ENCODE measurements at regions of chr17 and their contacts with region 1.

Region 1: DNA sequence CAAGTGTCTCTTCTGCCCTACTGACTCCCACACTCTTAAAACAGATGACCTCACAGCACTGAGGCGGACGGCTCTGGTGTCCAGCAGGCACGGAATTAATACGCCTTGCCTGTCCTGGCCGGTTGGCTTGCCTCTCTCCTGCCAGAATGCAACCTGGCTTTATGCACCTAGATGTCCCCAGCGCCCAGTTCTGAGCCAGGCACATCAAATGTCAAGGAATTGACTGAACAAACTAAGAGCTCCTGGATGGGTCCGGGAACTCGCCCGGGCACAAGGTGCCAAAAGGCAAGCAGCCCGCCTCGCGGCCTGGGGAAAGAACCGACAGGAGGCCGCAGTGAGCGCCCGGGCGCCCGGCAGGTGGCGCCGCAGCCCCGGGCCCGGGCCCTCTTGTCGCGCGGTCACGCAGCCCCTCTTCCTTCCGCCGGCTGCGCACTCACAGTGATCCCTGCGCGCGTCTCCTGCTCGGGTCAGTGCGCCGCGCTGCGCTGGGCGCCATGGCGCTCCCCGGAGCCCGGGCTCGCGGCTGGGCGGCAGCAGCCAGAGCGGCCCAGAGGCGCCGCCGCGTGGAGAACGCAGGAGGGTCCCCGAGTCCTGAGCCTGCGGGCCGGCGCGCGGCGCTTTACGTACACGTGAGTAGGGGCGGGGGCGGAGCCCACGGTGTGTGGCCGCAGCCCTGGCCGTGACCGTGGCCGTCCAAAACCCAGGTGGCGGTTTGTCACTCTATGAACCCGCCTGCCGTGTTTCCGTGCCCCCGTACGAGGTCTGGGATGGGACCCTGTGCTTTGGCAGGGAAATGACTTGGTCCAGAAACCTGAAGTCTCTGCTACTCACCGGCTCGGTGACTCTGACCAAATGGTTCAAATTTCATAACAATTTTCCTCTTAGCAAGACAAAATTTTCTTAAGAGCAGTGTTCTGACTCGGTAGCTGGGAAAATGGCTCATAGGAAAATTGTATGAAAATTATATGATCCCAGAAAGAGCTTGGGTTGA is at the start of gene RSAD1:
- DNase-seq: peak; percentile 81 to 93
- H3K4me3 ChIP-seq: peak within 1 kb of the TSS; percentile 86
- H3K27ac ChIP-seq: peak within 1 kb of the TSS; percentile 54
- H3K4me1 ChIP-seq: peaks cover 32% of the 10 kb centered on the region
- H3K27me3 ChIP-seq: no peaks in the 10 kb centered on the region
- CTCF ChIP-seq: peak; percentile 83
- total RNA-seq, gene RSAD1: 14.8 and 15.1 TPM in 2 replicates

Region 2: GRCh38 chr17:49952209-49952911 is 526.3 kb before region 1 on chr17:
- CTCF ChIA-PET with region 1: no interaction called
- POLR2A ChIA-PET with region 1: no interaction called
- intact Hi-C with region 1: no loop called
- DNase-seq: peak; percentile 70 to 83
- H3K4me3 ChIP-seq: no peak overlapping the region
- H3K27ac ChIP-seq: no peak overlapping the region
- H3K4me1 ChIP-seq: no peaks in the 10 kb centered on the region
- H3K27me3 ChIP-seq: peaks cover 3% of the 10 kb centered on the region; the same call in 1 of the 2 replicates
- CTCF ChIP-seq: peak; percentile 97

Region 3: DNA sequence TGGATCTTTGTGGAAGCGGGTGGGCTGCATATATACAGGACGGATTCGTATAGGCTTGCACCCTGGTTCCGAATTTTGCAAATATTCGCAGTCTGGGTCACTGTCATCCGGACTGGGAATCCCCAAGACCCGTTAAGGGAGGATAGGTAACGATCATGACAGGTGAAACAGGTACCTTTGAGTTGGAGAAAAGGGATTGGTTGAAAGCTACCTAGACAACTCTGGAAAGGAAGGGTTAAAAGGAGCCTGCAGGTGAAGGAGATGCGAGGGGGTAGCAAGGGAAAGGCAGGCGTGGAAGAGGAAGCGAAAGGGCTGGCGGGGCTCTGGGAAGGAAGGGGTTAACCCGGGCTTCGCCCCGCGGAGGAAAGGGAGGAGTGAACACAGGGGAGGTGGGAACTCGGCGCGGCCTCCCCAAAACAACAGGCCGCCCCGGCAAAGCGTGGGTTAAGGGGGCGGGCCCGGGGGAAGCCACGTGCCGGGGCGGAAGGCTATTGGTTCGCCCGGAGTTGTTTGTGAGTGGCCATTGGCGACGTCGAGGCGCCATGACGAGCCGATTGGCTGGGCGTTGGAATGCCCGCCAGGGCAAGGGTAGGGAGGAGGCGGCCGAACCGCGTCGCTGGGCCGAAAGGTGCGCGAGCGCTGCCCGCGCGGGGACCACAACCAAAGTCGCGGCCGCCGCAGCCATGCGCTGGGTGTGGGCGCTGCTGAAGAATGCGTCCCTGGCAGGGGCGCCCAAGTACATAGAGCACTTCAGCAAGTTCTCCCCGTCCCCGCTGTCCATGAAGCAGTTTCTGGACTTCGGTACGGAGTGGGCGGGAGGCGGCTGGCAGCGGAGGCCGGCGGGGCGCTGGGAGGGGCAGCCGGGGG is 383.7 kb before region 1 on chr17 and contains the start of gene PDK2:
- CTCF ChIA-PET with region 1: no interaction called
- POLR2A ChIA-PET with region 1: no interaction called
- intact Hi-C with region 1: loop called (anchors 10 kb)
- DNase-seq: peak; percentile 92 to 97
- H3K4me3 ChIP-seq: peak within 1 kb of the TSS; percentile 88
- H3K27ac ChIP-seq: peak within 1 kb of the TSS; percentile 12; the same call in 1 of the 2 replicates
- H3K4me1 ChIP-seq: peaks cover 18% of the 10 kb centered on the region
- H3K27me3 ChIP-seq: no peaks in the 10 kb centered on the region
- CTCF ChIP-seq: no peak
- total RNA-seq, gene PDK2: 38.6 and 58.7 TPM in 2 replicates

Region 4: DNA sequence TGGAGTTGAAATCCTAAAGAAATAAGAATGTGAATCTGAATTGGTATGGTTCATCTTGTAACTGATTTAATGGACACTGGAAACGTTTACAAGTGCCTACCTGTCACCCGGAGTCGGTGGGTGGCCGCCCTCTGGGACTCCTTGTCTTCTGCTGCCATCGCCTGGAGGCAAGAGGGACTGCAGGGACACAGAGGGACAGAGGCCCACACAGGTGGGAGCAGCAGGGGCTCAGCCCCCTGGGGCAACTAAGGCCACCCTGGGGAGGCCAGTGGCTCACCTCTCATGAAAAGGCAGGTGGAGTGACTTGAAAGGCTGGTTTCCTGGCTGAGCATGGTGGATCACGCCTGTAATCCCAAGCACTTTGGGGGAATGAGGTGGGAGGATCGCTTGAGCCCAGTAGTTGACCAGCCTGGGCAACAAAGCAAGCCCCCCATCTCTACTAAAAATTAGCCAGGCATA is 181.2 kb before region 1 on chr17:
- CTCF ChIA-PET with region 1: interaction called, 3 read pairs
- POLR2A ChIA-PET with region 1: no interaction called
- intact Hi-C with region 1: loop called (anchors 2 kb)
- DNase-seq: peak; percentile 47 to 81
- H3K4me3 ChIP-seq: no peak overlapping the region
- H3K27ac ChIP-seq: no peak overlapping the region
- H3K4me1 ChIP-seq: no peaks in the 10 kb centered on the region
- H3K27me3 ChIP-seq: no peaks in the 10 kb centered on the region
- CTCF ChIP-seq: peak; percentile 94

Region 5: DNA sequence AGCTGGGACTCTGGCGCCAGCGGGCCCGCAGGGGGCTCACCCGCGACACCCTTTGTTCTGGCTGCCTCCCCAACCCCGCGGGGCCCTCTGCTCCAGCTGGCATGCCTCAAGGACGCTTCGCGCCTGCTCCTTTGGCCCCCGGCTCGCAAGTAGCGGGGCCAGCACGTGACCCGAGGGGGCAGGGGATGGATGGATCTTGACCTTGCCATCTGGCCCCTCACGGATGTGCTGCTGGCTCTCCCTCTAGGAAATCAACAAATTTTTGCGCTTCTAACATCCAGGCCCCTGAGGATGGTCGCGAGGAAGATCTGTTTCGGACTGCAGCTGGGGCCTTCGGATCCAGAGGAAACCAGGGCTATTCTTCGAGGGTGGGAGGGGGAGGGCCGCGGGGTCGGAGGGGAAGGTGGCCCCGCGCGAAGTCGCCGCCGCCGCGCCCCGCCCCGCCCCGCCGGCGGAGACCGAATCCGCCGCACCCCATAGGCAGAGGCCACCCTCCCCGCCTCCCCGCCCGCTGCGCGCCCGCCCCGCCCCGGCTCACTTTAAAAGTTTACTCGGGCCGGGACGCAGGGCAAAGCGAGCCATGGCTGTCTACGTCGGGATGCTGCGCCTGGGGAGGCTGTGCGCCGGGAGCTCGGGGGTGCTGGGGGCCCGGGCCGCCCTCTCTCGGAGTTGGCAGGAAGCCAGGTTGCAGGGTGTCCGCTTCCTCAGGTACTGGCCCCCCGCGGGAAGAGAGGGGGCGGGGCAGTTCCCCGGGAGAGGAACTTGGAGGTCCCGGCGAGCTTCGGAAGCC is 52.8 kb before region 1 on chr17 and contains the start of gene ACSF2:
- CTCF ChIA-PET with region 1: no interaction called
- POLR2A ChIA-PET with region 1: no interaction called
- intact Hi-C with region 1: loop called (anchors 1 kb)
- DNase-seq: peak; percentile 56 to 72
- H3K4me3 ChIP-seq: peak within 1 kb of the TSS; percentile 63
- H3K27ac ChIP-seq: peak within 1 kb of the TSS; percentile 92
- H3K4me1 ChIP-seq: peaks cover 84% of the 10 kb centered on the region
- H3K27me3 ChIP-seq: no peaks in the 10 kb centered on the region
- CTCF ChIP-seq: no peak
- total RNA-seq, gene ACSF2: 149 and 154 TPM in 2 replicates

Region 6: DNA sequence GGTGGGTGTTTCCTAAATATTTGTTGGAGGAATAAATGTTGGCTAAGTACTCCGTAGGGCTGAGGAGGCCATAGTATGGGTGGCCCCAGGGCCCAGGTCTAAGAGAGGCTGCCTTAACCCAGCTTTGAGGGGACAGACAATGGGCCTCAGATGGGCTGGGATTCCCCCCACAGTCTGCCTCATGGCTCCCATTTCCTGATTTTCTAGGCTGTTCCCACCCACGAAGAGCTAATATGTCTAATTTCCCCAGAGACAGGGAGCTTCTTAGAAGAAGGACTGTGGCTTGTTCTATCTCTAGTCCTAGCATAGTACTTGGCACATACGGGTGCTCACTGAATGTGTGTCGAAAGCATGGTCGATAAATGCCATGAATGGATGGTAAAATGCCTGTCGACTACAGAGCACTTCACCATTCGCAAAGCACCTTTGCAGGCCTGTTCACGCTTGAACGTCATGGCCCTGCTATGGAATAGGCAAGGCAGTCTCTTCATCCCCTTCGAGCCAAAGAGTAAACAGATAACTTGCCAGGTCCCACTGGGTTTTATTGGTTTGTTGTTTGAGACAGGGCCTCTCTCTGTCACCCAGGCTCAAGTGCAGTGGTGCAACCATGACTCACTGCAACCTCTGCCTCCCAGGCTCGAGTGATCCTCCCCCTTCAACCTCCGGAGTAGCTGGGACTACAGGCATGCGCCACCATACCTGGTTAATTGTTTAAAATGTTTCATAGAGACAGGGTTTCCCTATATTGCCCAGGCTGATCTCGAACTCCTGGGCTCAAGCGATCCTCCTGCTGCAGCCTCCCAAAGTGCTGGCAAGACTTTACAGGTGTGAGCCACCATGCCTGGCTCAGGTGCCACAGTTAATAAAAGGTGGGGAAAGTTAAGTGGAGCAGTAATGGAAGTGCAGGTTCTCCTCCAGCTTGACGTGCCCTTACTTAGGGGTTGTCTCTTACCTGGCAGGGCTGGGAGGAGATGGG is 19.7 kb before region 1 on chr17:
- CTCF ChIA-PET with region 1: no interaction called
- POLR2A ChIA-PET with region 1: no interaction called
- intact Hi-C with region 1: no loop called
- DNase-seq: peak in 1 of 2 experiments; percentile 62
- H3K4me3 ChIP-seq: no peak overlapping the region
- H3K27ac ChIP-seq: 0 out of 2 replicates have a peak overlapping the region, but pooled peaks have one; percentile 9
- H3K4me1 ChIP-seq: peaks cover 38% of the 10 kb centered on the region
- H3K27me3 ChIP-seq: no peaks in the 10 kb centered on the region
- CTCF ChIP-seq: no peak

Region 7: GRCh38 chr17:50514946-50515702 is 36.4 kb after region 1 on chr17:
- CTCF ChIA-PET with region 1: no interaction called
- POLR2A ChIA-PET with region 1: no interaction called
- intact Hi-C with region 1: no loop called
- DNase-seq: no peak
- H3K4me3 ChIP-seq: no peak overlapping the region
- H3K27ac ChIP-seq: no peak overlapping the region
- H3K4me1 ChIP-seq: peaks cover 31% of the 10 kb centered on the region
- H3K27me3 ChIP-seq: no peaks in the 10 kb centered on the region
- CTCF ChIP-seq: no peak

Region 8: GRCh38 chr17:50527155-50527762 is 48.6 kb after region 1 on chr17:
- CTCF ChIA-PET with region 1: interaction called, 12 read pairs
- POLR2A ChIA-PET with region 1: no interaction called
- intact Hi-C with region 1: no loop called
- DNase-seq: no peak
- H3K4me3 ChIP-seq: no peak overlapping the region
- H3K27ac ChIP-seq: no peak overlapping the region
- H3K4me1 ChIP-seq: peaks cover 15% of the 10 kb centered on the region
- H3K27me3 ChIP-seq: no peaks in the 10 kb centered on the region
- CTCF ChIP-seq: no peak

Region 9: GRCh38 chr17:50626037-50626574 is 147.4 kb after region 1 on chr17:
- CTCF ChIA-PET with region 1: no interaction called
- POLR2A ChIA-PET with region 1: interaction called, 11 read pairs
- intact Hi-C with region 1: loop called (anchors 1 kb)
- DNase-seq: peak; percentile 50 to 52
- H3K4me3 ChIP-seq: no peak overlapping the region
- H3K27ac ChIP-seq: no peak overlapping the region
- H3K4me1 ChIP-seq: peaks cover 31% of the 10 kb centered on the region
- H3K27me3 ChIP-seq: no peaks in the 10 kb centered on the region
- CTCF ChIP-seq: peak; percentile 91